Heart right ventricle (tissue), 16 donors: ENCODE measurements at regions of chr1 and their contacts with region 1.

Region 1: GRCh38 chr1:65083263-65083896 is 64.6 kb upstream of the AK4 start:
- DNase-seq: no peak
- ATAC-seq: no peak
- H3K4me3 ChIP-seq: no peak overlapping the region
- H3K27ac ChIP-seq: no peak overlapping the region
- H3K4me1 ChIP-seq: peaks cover 0 to 6% (median 0%) of the 10 kb centered on the region in 9 donors
- H3K27me3 ChIP-seq: no peaks in the 10 kb centered on the region
- CTCF ChIP-seq: no peak

Region 2: GRCh38 chr1:65048335-65048734 is 35.0 kb before region 1 on chr1:
- intact Hi-C with region 1: no loop called
- DNase-seq: no peak
- ATAC-seq: no peak
- H3K4me3 ChIP-seq: no peak overlapping the region
- H3K27ac ChIP-seq: no peak overlapping the region
- H3K4me1 ChIP-seq: peaks cover 0 to 26% (median 0%) of the 10 kb centered on the region in 9 donors
- H3K27me3 ChIP-seq: no peaks in the 10 kb centered on the region
- CTCF ChIP-seq: no peak

Region 3: GRCh38 chr1:65114322-65114721 is 30.9 kb after region 1 on chr1:
- intact Hi-C with region 1: no loop called
- DNase-seq: peak in 1 of 2 donors; percentile 63
- ATAC-seq: peak in 7 of 8 donors; percentile 33 to 76 (median 71)
- H3K4me3 ChIP-seq: peak overlapping the region in 1 of 10 donors; percentile 9
- H3K27ac ChIP-seq: peak overlapping the region in 6 of 10 donors; percentile 23 to 70 (median 48)
- H3K4me1 ChIP-seq: peaks cover 0 to 23% (median 13%) of the 10 kb centered on the region in 9 donors
- H3K27me3 ChIP-seq: no peaks in the 10 kb centered on the region
- CTCF ChIP-seq: no peak

Region 4: GRCh38 chr1:65141918-65142317 is 58.5 kb after region 1 on chr1:
- intact Hi-C with region 1: loop called in 2 of 10 experiments (anchors 5 to 10 kb)
- DNase-seq: no peak
- ATAC-seq: no peak
- H3K4me3 ChIP-seq: no peak overlapping the region
- H3K27ac ChIP-seq: no peak overlapping the region
- H3K4me1 ChIP-seq: peaks cover 0 to 17% (median 3%) of the 10 kb centered on the region in 9 donors
- H3K27me3 ChIP-seq: peaks cover 0 to 13% (median 0%) of the 10 kb centered on the region in 7 donors
- CTCF ChIP-seq: no peak